OCI-LY7 (cell line): ENCODE measurements at regions of chr1 and their contacts with region 1.

Region 1: GRCh38 chr1:179510038-179510437 is 65.7 kb downstream of the NPHS2 start:
- DNase-seq: peak; percentile 92
- H3K4me3 ChIP-seq: peak overlapping the region; percentile 35
- H3K27ac ChIP-seq: peak overlapping the region; percentile 86
- H3K4me1 ChIP-seq: peaks cover 37% of the 10 kb centered on the region
- CTCF ChIP-seq: no peak

Region 2: GRCh38 chr1:179121159-179121938 is 388.7 kb before region 1 on chr1:
- CTCF ChIA-PET with region 1: no interaction called
- POLR2A ChIA-PET with region 1: no interaction called
- intact Hi-C with region 1: loop called (anchors 10 kb)
- DNase-seq: peak; percentile 63
- H3K4me3 ChIP-seq: no peak overlapping the region
- H3K27ac ChIP-seq: no peak overlapping the region
- H3K4me1 ChIP-seq: no peaks in the 10 kb centered on the region
- CTCF ChIP-seq: peak; percentile 88

Region 3: DNA sequence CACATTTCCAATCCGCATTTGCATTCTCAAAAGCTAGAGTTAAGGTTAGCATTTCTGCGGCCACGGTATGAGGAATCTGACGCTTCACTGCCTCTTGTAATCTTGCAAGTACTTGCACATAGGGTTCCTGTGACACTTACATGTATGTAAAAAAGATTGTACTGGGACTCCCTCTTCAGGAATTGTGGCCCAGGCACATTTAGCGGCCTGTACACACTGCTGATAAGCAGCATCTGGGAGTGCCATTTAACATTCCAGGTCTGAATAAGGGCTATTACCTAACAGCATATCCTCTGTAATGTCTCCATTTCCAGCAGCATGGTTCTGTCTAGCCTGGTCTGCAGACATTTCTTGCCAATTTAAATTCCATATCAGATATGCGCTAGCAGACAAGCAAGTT is 68.5 kb before region 1 on chr1:
- CTCF ChIA-PET with region 1: interaction called, 4 read pairs
- POLR2A ChIA-PET with region 1: interaction called, 3 read pairs
- intact Hi-C with region 1: loop called (anchors 2 kb)
- DNase-seq: peak; percentile 18
- H3K4me3 ChIP-seq: no peak overlapping the region
- H3K27ac ChIP-seq: no peak overlapping the region
- H3K4me1 ChIP-seq: peaks cover 50% of the 10 kb centered on the region
- CTCF ChIP-seq: no peak

Region 4: DNA sequence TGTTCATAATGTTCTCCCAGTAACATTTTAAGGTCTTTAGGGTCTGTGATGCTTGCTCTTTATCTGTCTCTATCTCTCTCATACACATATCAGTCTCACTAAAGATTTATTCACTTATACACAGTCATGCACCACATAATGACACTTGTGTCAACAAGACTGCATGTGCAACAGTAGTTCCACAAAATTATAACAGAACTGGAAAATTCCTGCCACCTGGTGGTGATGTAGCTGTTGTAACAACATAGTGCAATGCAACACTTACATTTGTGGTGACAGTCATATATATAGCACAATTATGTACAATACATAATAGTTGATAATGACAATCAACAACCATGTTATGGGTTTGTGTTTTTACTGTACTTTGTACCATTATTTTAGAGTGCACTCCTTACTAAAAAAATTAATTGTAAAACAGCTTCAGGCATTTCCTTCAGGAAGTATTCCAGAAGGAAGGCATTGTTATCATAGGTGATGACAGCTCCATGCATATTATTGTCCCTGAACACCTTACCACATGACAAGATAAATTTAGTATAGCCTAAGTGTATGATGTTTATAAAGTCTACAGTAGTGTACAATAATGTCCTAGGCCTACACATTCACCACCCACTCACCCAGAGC is 89.7 kb after region 1 on chr1:
- CTCF ChIA-PET with region 1: no interaction called
- POLR2A ChIA-PET with region 1: no interaction called
- intact Hi-C with region 1: loop called (anchors 5 kb)
- DNase-seq: peak; percentile 85
- H3K4me3 ChIP-seq: no peak overlapping the region
- H3K27ac ChIP-seq: no peak overlapping the region
- H3K4me1 ChIP-seq: peaks cover 44% of the 10 kb centered on the region
- CTCF ChIP-seq: peak; percentile 95